AG04450 (cell line): ENCODE measurements at regions of chr16 and their contacts with region 1.

Region 1: GRCh38 chr16:67816240-67817031 is 9.7 kb downstream of the TSNAXIP1 start:
- DNase-seq: peak; percentile 36
- H3K4me3 ChIP-seq: no peak overlapping the region
- H3K27ac ChIP-seq: no peak overlapping the region
- H3K27me3 ChIP-seq: no peaks in the 10 kb centered on the region
- CTCF ChIP-seq: peak; percentile 100

Region 2: DNA sequence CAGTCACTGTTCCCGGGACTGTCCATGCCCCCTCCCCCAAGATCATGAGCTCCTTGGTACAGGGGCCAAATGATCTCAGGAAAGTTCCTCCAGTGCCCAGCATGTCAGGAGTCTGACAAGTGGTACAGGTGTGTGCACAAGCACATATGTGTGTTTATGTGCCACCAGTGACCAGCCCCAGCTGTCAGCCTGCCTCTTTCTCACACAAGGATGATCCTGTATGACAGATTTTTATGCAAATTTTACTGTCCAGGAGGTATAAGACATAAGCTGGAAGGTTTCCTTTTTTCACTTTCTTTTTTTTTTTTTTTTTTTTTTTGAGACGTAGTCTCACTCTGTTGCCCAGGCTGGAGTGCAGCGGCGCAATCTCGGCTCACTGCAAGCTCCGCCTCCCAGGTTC is 66.0 kb before region 1 on chr16:
- CTCF ChIA-PET with region 1: interaction called, 11 read pairs
- POLR2A ChIA-PET with region 1: no interaction called
- DNase-seq: no peak
- H3K4me3 ChIP-seq: no peak overlapping the region
- H3K27ac ChIP-seq: no peak overlapping the region
- H3K27me3 ChIP-seq: no peaks in the 10 kb centered on the region
- CTCF ChIP-seq: no peak

Region 3: GRCh38 chr16:67833418-67834241 is 17.2 kb after region 1 on chr16:
- CTCF ChIA-PET with region 1: interaction called, 15 read pairs
- POLR2A ChIA-PET with region 1: interaction called, 10 read pairs
- DNase-seq: peak; percentile 63
- H3K4me3 ChIP-seq: peak overlapping the region; percentile 75
- H3K27ac ChIP-seq: peak overlapping the region; percentile 77
- H3K27me3 ChIP-seq: no peaks in the 10 kb centered on the region
- CTCF ChIP-seq: no peak

Region 4: DNA sequence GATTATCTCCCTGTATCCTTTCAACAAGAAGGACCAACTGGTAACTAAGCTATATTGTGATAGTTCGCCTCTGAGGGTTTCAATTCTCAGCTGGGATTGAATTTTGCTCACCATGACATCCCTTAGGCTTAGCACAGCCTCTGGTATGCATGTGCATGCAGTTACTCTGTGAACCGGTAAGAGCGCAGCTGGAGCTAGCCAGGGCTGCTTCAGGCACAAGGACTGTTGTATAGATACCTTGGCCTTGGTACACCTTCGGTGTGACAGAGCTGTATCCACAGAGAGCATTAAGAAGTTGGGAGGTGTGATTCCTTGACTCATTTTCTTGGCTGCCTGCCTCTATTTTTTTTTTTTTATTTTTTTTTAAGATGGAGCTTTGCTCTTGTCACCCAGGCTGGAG is 28.0 kb after region 1 on chr16:
- CTCF ChIA-PET with region 1: interaction called, 10 read pairs
- POLR2A ChIA-PET with region 1: interaction called, 3 read pairs
- DNase-seq: no peak
- H3K4me3 ChIP-seq: peak overlapping the region; percentile 29
- H3K27ac ChIP-seq: peak overlapping the region; percentile 34
- H3K27me3 ChIP-seq: no peaks in the 10 kb centered on the region
- CTCF ChIP-seq: no peak

Region 5: DNA sequence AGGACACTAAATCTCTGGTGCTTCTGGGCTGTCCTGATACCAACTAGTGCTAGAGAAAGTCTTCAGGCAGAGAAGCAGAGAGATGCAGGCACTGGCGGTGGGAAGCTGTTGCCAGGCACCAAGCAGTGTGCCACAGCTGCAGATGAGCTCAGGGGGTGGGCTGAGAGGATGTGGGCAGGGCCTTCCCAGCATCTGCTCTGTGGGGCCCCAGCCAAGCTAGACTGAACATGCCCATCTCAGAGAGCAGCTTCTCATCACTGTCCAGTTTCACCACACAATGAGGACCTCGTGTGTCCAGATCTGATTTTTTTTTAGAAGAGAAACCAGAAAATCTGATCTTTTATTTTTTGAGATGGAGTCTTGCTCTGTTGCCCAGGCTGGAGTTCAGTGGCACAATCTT is 93.7 kb after region 1 on chr16:
- CTCF ChIA-PET with region 1: interaction called, 10 read pairs
- POLR2A ChIA-PET with region 1: no interaction called
- DNase-seq: peak; percentile 42
- H3K4me3 ChIP-seq: no peak overlapping the region
- H3K27ac ChIP-seq: no peak overlapping the region
- H3K27me3 ChIP-seq: no peaks in the 10 kb centered on the region
- CTCF ChIP-seq: no peak

Region 6: DNA sequence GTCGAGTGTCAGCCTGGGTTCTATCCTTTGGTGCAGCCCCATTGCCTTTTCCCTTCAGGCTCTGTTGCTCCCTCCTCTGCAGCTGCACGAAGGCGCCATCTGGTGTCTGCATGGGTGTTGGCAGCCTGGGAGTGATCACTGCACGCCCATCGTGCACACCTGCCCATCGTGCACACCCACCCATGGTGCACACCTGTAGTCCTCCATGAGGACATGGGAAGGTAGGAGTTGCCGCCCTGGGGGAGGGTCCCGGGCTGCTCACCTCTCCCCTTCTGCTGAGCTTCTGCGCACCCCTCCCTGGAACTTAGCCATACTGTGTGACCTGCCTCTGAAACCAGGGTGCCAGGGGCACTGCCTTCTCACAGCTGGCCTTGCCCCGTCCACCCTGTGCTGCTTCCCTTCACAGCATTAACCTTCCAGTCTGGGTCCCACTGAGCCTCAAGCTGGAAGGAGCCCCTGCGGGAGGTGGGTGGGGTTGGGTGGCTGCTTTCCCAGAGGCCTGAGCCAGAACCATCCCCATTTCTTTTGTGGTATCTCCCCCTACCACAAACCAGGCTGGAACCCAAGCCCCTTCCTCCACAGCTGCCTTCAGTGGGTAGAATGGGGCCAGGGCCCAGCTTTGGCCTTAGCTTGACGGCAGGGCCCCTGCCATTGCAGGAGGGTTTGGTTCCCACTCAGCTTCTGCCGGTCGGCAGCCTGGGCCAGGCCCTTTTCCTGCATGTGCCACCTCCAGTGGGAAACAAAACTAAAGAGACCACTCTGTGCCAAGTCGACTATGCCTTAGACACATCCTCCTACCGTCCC is 112.3 kb after region 1 on chr16:
- CTCF ChIA-PET with region 1: interaction called, 23 read pairs
- POLR2A ChIA-PET with region 1: interaction called, 3 read pairs
- DNase-seq: no peak
- H3K4me3 ChIP-seq: no peak overlapping the region
- H3K27ac ChIP-seq: no peak overlapping the region
- H3K27me3 ChIP-seq: no peaks in the 10 kb centered on the region
- CTCF ChIP-seq: peak; percentile 90